RWPE1 (cell line): ENCODE measurements at regions of chr3 and their contacts with region 1.

Region 1: GRCh38 chr3:150996731-150997130 is 24.2 kb upstream of the CLRN1 start:
- DNase-seq: no peak
- H3K27ac ChIP-seq: no peak overlapping the region
- CTCF ChIP-seq: no peak

Region 2: GRCh38 chr3:151268267-151269235 is 271.8 kb after region 1 on chr3:
- CTCF ChIA-PET with region 1: no interaction called
- POLR2A ChIA-PET with region 1: no interaction called
- DNase-seq: no peak
- H3K27ac ChIP-seq: no peak overlapping the region
- CTCF ChIP-seq: no peak

Region 3: GRCh38 chr3:151630938-151631441 is 634.3 kb after region 1 on chr3:
- CTCF ChIA-PET with region 1: no interaction called
- POLR2A ChIA-PET with region 1: interaction called, 10 read pairs
- DNase-seq: no peak
- H3K27ac ChIP-seq: no peak overlapping the region
- CTCF ChIP-seq: no peak